ENCODE measurements at regions of chr2 and their contacts with region 1.

Region 1: DNA sequence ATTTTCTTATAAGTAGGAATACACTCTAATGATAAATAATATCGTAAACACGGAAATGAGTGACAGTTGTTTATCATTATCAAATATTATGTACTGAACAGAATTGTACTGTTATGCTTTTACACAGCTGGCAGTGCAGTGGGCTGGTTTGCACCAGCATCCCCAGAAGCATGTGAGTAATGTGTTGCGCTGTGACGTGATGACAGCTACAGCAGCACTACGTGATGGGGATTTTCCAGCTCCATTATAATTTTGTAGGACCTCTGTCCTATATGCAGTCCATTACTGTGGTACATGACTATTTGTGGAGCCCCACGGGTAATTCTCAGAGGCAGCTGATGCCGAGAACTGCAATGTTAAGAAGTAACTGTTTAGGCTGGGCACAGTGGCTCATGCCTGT is 77.3 kb upstream of the ATG16L1 start:
- DNase-seq: no peak
- H3K4me3 ChIP-seq: no peak overlapping the region
- H3K27ac ChIP-seq: no peak overlapping the region
- H3K4me1 ChIP-seq: no peaks in the 10 kb centered on the region
- H3K27me3 ChIP-seq: no peaks in the 10 kb centered on the region
- CTCF ChIP-seq: no peak

Region 2: DNA sequence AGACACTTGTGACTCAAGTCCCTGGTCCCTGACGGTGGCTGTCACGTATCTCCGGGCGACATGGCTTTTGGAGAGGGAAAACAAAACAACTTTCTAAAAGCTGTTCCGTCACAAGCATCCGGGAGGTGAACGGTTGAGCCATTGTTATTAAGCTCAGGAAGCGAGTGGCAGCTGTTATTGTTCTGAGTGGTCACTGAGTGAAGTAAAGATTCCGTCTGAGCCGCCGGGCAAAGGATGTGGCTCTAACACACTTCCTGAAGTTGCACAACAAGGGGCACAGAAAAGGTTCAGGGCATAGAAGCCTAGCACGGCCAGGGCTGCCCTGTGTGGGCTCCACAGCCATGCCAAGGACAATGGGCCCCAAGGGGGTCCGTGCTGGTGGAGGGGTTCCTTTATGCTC is 89.6 kb before region 1 on chr2:
- CTCF ChIA-PET with region 1: no interaction called
- dilution Hi-C with region 1: loop called (anchors 5 kb)
- in situ Hi-C with region 1: no loop called
- intact Hi-C with region 1: no loop called
- DNase-seq: no peak
- H3K4me3 ChIP-seq: no peak overlapping the region
- H3K27ac ChIP-seq: no peak overlapping the region
- H3K4me1 ChIP-seq: no peaks in the 10 kb centered on the region
- H3K27me3 ChIP-seq: peaks cover 3% of the 10 kb centered on the region
- CTCF ChIP-seq: no peak

Region 3: DNA sequence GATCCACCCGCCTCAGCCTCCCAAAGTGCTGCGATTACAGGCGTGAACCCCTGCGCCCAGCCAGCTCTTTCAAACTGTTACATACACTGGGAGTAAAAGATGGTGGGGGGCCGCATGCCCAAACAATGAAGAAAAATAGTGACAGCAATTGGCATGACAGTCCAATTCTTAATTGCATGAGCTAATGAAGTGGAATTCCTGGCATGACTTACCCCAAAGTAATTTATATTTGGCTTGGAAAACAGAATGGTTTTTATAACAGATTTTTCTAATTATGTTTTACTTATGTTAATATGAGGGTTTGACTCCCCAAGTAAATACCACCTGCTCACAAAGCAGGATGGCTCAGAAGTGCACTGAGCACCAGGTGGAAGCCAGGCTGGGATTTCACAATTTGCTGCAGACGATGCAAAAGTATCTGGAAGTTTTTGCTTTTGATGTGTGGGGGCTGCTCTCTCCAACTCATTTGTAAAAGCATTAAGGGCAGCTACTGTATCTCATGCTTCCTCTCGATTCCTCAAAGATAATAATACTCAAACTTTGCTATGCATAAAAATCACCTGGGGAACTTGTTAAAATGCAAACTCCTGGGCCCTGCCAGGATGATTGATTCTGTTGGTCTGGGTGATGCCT is 53.3 kb after region 1 on chr2:
- CTCF ChIA-PET with region 1: no interaction called
- dilution Hi-C with region 1: no loop called
- in situ Hi-C with region 1: no loop called
- intact Hi-C with region 1: no loop called
- DNase-seq: no peak
- H3K4me3 ChIP-seq: no peak overlapping the region
- H3K27ac ChIP-seq: no peak overlapping the region
- H3K4me1 ChIP-seq: no peaks in the 10 kb centered on the region
- H3K27me3 ChIP-seq: no peaks in the 10 kb centered on the region
- CTCF ChIP-seq: no peak

Region 4: GRCh38 chr2:233242231-233242927 is 68.2 kb after region 1 on chr2:
- CTCF ChIA-PET with region 1: no interaction called
- dilution Hi-C with region 1: loop called (anchors 5 kb)
- in situ Hi-C with region 1: no loop called
- intact Hi-C with region 1: no loop called
- DNase-seq: no peak
- H3K4me3 ChIP-seq: no peak overlapping the region
- H3K27ac ChIP-seq: no peak overlapping the region
- H3K4me1 ChIP-seq: peaks cover 25% of the 10 kb centered on the region
- H3K27me3 ChIP-seq: no peaks in the 10 kb centered on the region
- CTCF ChIP-seq: no peak